GM18951 (cell line): ENCODE measurements at regions of chr10 and their contacts with region 1.

Region 1: GRCh38 chr10:24503461-24504320 is 220.0 kb downstream of the ARHGAP21 start:
- POLR2A ChIP-seq: no peak

Region 2: GRCh38 chr10:23994479-23995046 is 509.1 kb before region 1 on chr10:
- in situ Hi-C with region 1: loop called (anchors 25 kb)
- POLR2A ChIP-seq: no peak

Region 3: DNA sequence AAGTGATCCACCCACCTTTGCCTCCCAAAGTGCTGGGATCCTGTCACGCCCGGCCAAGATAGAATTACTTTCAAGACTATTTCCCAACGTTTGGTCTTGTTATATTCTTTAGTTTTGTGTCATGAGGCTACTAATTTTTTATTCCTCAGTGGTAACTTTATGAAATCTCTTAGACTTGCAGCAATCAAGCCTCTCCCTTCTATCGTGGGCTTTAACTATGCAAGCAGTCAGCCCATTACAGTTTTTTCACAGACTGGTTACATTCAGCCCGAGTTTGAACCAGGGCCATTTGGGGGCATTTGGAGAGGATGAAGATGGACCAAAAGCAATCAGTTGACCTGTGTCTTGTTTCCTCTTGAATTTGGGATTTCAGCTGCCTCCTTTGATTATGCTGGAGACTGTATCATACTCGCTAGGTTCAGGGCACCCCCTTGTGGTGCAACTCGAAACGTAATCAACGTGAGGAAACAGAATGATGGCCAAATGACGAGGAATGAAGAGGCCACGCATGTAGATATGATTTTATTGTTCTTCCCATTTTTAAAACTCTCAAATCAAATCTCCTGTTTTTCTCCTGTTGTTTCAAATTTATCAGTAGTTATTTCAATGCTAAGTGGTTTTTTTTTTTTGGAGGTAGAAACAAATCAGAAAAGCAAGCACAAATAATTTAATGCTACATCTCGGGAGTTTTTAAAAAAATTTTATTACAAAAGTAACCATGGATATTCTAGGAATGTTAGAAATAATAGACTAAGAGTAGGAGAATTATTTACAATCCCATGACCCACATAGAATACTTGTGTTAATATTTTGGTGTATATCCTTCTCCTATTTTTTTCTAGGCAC is 143.2 kb before region 1 on chr10:
- in situ Hi-C with region 1: loop called (anchors 10 kb)
- POLR2A ChIP-seq: no peak

Region 4: GRCh38 chr10:24432472-24433416 is 70.9 kb before region 1 on chr10:
- in situ Hi-C with region 1: no loop called
- POLR2A ChIP-seq: no peak

Region 5: DNA sequence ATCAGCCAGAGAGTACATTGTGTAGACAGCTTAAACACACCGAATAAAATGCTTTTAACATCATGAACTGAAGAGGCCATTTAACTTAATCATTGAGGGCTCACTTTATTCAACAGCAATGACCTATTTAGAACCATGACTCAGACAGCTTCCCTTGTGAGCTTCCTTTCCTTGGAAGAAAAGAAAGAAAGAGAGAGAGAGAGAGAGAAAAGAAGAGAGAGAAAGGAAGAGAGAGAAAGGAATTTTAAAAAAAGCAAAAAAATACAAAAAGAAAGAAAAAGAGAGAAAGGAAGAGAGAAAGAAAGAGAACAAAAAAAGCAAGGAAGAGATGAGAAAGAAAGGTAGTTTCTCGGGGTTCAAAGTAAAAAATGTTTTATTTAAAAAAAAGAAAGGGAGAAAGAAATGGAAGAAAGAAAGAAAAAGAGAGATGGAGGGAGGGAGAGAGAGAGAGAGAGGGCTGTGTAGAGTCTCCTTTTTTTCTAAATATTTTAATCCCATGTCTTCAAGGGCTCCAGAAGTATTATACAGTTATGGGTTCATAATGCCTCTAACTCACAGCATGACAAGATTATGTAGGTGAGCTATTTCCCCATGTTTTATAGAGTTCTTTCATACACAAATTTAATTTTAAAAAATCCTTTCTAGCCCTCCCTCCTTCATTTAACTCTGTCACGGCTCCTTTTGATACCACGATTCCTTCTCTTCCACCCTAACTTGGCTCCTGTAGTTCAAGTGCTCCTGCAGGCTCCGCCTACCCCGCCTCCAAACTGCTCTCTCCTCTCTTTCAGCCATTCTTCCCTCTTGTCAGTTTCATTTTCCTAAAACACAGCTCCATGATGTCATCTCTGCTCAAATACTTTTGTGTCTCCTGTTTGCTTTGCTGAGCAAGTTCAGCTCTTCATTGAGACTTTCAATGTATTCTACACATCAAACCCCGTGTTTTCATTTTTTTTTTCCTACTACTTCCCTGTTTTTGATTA is 363.2 kb after region 1 on chr10:
- in situ Hi-C with region 1: no loop called
- POLR2A ChIP-seq: no peak